CD14-positive monocyte (primary cell): ENCODE measurements at regions of chr12 and their contacts with region 1.

Region 1: DNA sequence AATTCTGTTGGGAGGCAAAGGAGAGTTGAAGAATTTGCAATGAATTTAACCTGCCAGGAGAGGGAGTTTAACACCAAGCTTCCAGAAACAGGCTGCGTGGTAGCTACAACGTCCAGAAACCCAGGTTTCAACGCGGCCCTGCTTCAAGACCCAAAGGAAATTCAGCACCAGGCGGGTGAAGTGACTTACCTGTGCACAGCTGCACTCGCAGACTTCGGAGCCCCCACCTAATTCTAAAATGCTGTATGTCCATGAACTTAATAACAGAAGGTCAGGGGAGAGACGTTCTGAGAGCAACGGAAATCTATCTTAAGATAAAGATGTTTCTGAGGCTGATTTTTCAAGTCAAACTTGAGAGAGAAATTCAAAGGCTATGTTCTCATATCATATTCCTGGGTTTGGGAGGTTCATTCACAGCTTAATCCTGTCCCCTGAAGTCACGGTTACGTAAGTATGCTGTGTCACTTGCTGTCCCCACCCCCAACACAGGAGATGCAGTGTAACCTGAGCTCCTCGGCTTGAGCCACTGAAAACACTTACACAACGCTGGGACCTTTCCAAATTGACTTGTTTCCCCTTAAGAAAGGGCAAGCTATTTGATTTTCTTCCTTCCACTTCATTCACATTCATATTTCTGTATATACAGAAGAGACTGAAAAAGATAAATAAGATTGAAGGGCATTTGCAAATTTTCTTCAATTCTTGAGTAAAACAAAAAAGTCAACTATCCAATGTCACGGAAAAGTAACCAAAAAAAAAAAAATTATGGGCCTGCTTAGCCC is 22.7 kb downstream of the CLIP1 start:
- DNase-seq: peak; percentile 82 to 93 (median 83)
- H3K4me3 ChIP-seq: peak overlapping the region; percentile 7 to 71 (median 28)
- H3K4me3 Mint-ChIP-seq: peak overlapping the region; percentile 77 to 89
- H3K27ac ChIP-seq: peak overlapping the region; percentile 93 to 94
- H3K27ac Mint-ChIP-seq: peak overlapping the region; percentile 95 to 99 (median 99)
- H3K4me1 ChIP-seq: peaks cover 21 to 27% of the 10 kb centered on the region in 2 donors
- H3K4me1 Mint-ChIP-seq: peaks cover 32% of the 10 kb centered on the region
- H3K27me3 ChIP-seq: no peaks in the 10 kb centered on the region
- H3K27me3 Mint-ChIP-seq: peaks cover 0 to 2% (median 0%) of the 10 kb centered on the region in 3 donors
- CTCF ChIP-seq: peak; percentile 86

Region 2: DNA sequence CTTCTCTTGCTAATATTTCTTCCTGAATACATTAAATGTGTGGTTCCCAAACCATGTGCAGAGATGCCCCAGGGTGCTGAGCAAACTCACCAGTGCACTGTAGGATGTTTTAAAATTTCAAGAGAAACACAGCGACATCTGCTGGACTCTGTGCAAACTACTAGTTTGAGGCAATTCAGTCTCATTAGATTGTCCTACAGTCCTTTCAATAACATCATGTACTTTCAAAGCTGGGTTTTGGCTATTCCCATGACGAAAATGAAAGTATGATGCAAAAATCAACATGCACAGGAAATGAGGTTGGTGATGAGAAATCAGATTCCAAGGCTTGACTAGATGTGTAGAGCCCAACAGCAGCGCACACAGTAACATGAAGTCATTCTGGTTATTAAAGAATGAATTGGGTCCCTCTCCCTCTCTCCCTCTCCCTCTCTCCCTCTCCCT is 43.6 kb before region 1 on chr12:
- intact Hi-C with region 1: no loop called
- DNase-seq: peak; percentile 13 to 31 (median 28)
- H3K4me3 ChIP-seq: no peak overlapping the region
- H3K4me3 Mint-ChIP-seq: no peak overlapping the region
- H3K27ac ChIP-seq: no peak overlapping the region
- H3K27ac Mint-ChIP-seq: peak overlapping the region in 1 of 7 donors; percentile 30
- H3K4me1 ChIP-seq: no peaks in the 10 kb centered on the region
- H3K4me1 Mint-ChIP-seq: no peaks in the 10 kb centered on the region
- H3K27me3 ChIP-seq: no peaks in the 10 kb centered on the region
- H3K27me3 Mint-ChIP-seq: peaks cover 0 to 1% (median 0%) of the 10 kb centered on the region in 3 donors
- CTCF ChIP-seq: peak; percentile 87

Region 3: DNA sequence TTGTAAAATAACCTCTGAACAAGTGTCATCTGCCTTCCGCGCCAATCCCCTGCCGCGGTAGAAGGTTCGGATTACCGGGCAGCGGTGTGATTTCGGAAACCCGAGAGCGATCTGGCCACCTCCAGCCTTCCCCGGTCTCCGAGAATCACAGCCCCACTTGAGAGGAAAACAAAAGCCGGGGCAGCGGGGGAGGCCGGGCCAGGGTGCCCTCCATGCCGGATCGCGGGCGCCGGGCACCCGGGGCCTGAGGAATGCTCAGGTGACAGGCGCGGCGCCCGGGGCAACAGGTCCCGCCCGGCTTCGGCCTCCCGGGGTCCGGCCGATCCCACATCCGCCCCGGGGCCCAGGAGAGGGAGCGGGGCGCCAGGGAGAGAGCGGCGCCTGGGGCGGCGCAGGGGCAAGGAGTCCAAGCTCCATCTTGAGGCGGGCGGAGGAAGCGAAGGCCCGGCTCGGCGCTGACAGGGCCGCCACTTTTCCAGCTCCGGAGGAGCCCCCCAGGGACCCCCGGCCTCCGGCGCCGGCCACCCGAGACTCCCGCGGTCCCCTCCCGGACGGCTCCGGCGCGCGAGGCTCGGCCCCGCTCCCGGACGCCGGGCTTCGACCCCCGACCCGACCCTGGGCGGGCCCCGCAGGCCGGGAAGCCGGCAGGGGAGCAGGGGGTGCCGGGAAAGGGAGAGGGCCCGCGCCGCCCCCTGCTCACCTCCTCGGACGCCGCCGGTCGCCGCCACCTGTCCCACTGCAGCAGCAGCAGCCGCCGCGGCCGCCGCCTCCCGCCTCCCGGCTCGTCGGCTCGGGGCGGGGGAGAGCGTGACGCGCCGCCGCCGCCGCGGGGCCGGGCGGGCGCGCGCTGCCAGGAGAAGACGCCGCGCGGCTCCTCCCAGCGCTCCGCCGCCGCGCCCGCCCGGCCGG is 22.3 kb after region 1 on chr12 and contains the start of gene CLIP1:
- intact Hi-C with region 1: loop called in 1 of 2 experiments (anchors 2 kb)
- DNase-seq: peak in 2 of 3 donors; percentile 44 to 46
- H3K4me3 ChIP-seq: peak within 1 kb of the TSS; percentile 84 to 93 (median 91)
- H3K4me3 Mint-ChIP-seq: peak within 1 kb of the TSS; percentile 89 to 96
- H3K27ac ChIP-seq: peak within 1 kb of the TSS; percentile 97 to 98
- H3K27ac Mint-ChIP-seq: peak within 1 kb of the TSS; percentile 93 to 98 (median 98)
- H3K4me1 ChIP-seq: peaks cover 28 to 32% of the 10 kb centered on the region in 2 donors
- H3K4me1 Mint-ChIP-seq: peaks cover 22% of the 10 kb centered on the region
- H3K27me3 ChIP-seq: no peaks in the 10 kb centered on the region
- H3K27me3 Mint-ChIP-seq: peaks cover 2 to 3% (median 2%) of the 10 kb centered on the region in 3 donors
- CTCF ChIP-seq: peak; percentile 61
- polyA plus RNA-seq, gene CLIP1: 6.7 to 50.9 (median 12.9) TPM

Region 4: DNA sequence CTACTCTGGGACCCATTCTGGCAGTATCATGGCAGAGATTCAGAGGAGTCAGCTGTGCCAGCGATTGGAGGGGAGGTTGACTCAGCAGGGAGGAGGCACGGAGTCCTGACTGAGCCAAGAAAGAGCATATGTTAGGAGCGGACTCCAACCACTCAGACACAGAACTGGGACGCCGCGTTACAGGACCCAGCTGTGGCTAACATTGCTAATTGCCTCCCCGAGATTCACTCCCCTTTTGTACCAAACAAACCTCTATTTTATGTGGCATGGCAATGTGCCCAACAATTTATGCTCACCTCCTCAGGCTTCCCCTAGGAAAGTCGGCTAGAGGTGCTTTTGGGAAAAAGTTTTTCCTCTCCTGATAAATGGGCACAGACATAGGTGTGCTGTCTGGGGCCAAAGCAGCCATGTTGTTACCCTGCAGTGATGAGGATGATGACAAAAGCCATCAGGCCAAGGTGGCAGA is 37.9 kb after region 1 on chr12:
- intact Hi-C with region 1: no loop called
- DNase-seq: no peak
- H3K4me3 ChIP-seq: no peak overlapping the region
- H3K4me3 Mint-ChIP-seq: no peak overlapping the region
- H3K27ac ChIP-seq: no peak overlapping the region
- H3K27ac Mint-ChIP-seq: no peak overlapping the region
- H3K4me1 ChIP-seq: no peaks in the 10 kb centered on the region
- H3K4me1 Mint-ChIP-seq: no peaks in the 10 kb centered on the region
- H3K27me3 ChIP-seq: no peaks in the 10 kb centered on the region
- H3K27me3 Mint-ChIP-seq: peaks cover 1 to 11% (median 7%) of the 10 kb centered on the region in 3 donors
- CTCF ChIP-seq: no peak

Region 5: DNA sequence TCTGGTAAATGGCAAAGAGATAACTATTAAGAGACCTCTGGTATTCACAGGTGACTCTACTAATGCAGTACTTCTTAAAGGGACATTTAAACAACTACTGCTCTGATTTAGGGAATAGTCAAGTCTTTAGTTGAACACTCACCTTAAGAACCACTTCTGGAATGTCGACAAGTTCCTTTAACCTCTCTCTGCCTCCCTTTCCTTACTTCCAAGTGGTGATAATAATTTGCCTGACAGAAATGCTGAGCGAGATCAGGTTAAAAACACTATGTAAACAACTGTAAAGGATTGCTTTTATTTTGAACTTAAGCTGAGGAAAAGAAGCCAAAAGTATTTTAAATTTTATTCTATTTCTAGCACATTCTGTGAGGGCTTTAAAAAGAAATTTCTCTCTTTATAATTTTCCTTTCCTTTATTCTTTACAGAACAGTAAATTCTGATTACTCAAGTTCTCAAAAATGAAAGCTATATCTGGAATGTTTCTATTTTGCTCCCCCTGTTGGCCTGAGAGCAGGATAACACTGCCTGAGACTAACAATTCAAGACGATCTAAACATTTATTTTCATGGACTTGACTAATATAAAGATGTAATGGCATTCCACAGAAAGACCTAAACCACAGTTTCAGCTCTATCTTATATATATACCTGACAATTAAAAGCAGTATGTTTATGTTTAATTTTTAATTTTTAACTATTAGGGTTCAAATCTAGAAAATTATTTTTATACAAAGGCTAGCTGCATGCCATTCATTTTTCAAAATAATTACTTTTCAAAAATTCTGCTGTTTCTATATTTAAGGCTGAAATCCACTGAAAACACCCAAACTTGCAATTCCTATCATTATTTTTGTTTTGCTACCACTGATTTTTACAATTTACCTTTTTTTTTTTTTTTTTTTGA is 71.8 kb after region 1 on chr12:
- intact Hi-C with region 1: loop called (anchors 2 to 5 kb)
- DNase-seq: peak; percentile 36 to 63 (median 61)
- H3K4me3 ChIP-seq: no peak overlapping the region
- H3K4me3 Mint-ChIP-seq: no peak overlapping the region
- H3K27ac ChIP-seq: peak overlapping the region in 1 of 2 donors; percentile 29
- H3K27ac Mint-ChIP-seq: peak overlapping the region in 5 of 7 donors; percentile 10 to 77 (median 73)
- H3K4me1 ChIP-seq: no peaks in the 10 kb centered on the region
- H3K4me1 Mint-ChIP-seq: peaks cover 2% of the 10 kb centered on the region
- H3K27me3 ChIP-seq: no peaks in the 10 kb centered on the region
- H3K27me3 Mint-ChIP-seq: peaks cover 0 to 1% (median 0%) of the 10 kb centered on the region in 3 donors
- CTCF ChIP-seq: peak; percentile 85